Astrocyte of the cerebellum (primary cell): ENCODE measurements at regions of chr10 and their contacts with region 1.

Region 1: GRCh38 chr10:22620140-22620857 is 94.1 kb downstream of the PIP4K2A start:
- DNase-seq: peak; percentile 94
- H3K4me3 ChIP-seq: no peak overlapping the region
- CTCF ChIP-seq: no peak

Region 2: DNA sequence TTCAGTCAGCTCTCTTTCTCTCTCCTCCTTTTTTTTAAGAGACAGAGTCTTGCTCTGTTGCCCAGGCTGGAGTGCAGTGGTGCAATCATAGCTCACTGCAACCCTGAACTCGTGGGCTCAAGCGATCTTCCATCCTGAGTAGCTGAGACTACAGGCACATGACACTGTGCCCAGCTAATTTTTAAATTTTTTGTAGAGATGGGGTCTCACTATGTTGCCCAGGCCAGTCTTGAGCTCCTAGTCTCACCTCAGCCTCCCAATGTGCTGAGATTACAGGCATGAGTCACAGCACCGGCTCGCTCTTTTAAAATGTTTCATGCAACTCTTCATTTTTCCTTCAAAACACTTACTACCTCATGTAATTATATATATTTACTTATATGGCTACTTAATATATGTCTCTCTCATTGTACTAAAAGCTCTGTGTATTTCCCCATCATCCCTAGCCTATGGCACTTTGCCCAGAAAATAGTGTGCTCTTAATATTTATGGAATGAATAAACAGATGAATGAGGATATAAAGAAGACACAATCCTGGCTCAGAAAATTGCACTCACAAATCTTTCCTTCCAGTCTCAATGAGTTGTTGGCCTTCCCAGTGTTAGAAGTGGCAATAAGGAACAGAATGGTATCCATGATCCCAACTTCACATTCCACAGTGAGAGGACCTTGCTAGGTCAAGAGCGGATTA is 436.4 kb before region 1 on chr10:
- in situ Hi-C with region 1: no loop called
- DNase-seq: no peak
- H3K4me3 ChIP-seq: no peak overlapping the region
- CTCF ChIP-seq: no peak

Region 3: DNA sequence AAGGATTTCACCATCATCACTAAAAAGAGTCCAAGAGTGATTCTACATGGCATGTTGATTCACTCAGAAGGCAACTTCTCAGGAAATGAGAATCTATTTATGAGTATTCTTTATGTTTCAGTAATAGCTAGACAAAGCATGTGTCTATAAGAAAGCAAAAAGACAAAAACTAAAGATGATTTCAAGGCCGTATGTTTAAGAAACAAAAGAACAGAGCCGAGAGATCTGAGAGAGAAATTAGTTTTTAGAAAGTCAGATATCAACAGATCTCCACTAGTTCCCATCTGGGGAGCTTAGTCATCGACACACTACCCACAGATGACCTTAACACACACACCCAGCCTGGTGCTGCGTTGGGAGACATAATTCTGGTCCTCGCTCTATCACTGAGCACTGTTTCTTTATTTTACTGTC is 73.1 kb after region 1 on chr10:
- in situ Hi-C with region 1: loop called (anchors 5 kb)
- DNase-seq: no peak
- H3K4me3 ChIP-seq: no peak overlapping the region
- CTCF ChIP-seq: no peak